ENCODE measurements at regions of chrX and their contacts with region 1.

Region 1: DNA sequence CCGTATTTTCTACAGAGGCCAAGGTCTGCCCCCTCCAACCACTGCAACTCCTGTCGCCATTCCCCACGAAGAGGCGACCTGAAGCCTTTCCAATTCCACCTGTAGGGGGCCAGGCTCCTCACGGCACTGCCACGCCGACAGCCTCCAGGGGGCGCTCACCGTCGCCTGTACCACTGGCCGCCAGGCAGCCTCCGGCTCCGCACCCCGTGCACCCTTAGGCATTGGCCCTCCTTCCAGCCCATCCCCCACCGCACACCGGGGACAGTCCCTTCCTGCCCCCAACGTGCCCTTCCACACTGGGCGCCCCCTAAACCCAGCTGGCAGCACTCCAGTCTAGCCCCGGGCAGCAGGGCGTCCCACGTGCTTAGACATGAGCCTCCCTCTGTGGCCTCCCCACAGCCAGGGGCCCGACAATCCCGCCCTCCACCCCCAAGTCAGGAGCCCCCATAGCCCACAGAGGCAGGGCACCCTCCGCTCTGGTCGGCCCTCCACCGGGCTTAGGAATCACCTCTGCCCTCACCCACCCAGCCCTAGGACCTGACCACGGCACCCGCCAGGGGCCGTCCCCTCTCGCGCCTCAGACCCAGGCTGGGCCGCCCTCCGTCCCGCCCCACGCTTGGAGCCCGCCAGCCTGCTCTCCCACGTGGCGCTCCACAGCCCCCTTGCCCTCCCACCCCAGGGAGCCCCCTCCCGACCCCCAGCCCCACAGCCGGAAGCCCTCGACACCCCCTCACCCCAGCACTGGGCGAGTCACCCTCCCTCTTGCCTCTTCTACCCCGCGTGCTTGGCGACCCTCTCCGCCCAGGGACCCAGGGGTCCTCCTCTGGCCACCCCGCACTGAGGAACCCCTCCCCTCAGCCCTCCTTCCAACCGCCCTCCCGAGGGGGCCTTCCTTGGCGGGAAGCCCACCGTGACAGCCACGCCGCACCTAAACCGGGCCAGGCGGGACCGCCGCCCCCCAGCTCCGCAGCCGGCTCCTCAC is 713 bp downstream of the PNMA6E start:
- DNase-seq: no peak
- ATAC-seq: no peak
- H3K4me3 ChIP-seq: no peak overlapping the region
- H3K27ac ChIP-seq: no peak overlapping the region
- H3K4me1 ChIP-seq: no peaks in the 10 kb centered on the region
- H3K27me3 ChIP-seq: no peaks in the 10 kb centered on the region; the same call in 1 of the 2 replicates
- CTCF ChIP-seq: peak; percentile 56
- POLR2A ChIP-seq: no peak
- RAD21 ChIP-seq: no peak; the same call in 1 of the 2 replicates

Region 2: DNA sequence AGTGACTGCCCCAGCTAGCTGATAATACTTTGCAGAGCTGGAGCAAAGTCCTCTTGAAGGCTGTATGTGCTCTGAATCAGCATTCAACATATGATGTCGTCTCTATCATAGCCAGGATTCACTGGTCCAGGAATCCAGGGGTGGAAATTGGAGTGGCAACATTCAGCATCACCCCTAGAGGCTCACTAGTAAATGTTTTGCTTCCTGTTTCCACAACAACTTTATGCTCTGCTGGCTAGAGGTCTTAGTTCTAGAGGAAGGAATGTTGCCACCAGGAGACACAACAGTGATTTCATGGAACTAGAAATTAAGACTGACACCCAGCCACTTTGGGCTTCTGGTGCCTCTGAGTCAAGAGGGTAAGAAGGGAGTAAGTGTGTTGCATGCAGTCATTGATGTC is 210.1 kb before region 1 on chrX:
- CTCF ChIA-PET with region 1: no interaction called
- POLR2A ChIA-PET with region 1: no interaction called
- dilution Hi-C with region 1: no loop called
- in situ Hi-C with region 1: loop called (anchors 25 kb)
- intact Hi-C with region 1: no loop called
- DNase-seq: no peak
- ATAC-seq: no peak
- H3K4me3 ChIP-seq: no peak overlapping the region
- H3K27ac ChIP-seq: no peak overlapping the region
- H3K4me1 ChIP-seq: no peaks in the 10 kb centered on the region
- H3K27me3 ChIP-seq: no peaks in the 10 kb centered on the region
- CTCF ChIP-seq: no peak
- POLR2A ChIP-seq: no peak
- RAD21 ChIP-seq: no peak

Region 3: GRCh38 chrX:153456161-153456560 is 55.7 kb after region 1 on chrX:
- CTCF ChIA-PET with region 1: no interaction called
- POLR2A ChIA-PET with region 1: no interaction called
- dilution Hi-C with region 1: no loop called
- in situ Hi-C with region 1: no loop called
- intact Hi-C with region 1: no loop called
- DNase-seq: no peak
- ATAC-seq: no peak
- H3K4me3 ChIP-seq: no peak overlapping the region
- H3K27ac ChIP-seq: no peak overlapping the region
- H3K4me1 ChIP-seq: no peaks in the 10 kb centered on the region; the same call in 1 of the 2 replicates
- H3K27me3 ChIP-seq: no peaks in the 10 kb centered on the region
- CTCF ChIP-seq: no peak
- POLR2A ChIP-seq: no peak
- RAD21 ChIP-seq: no peak